PC-9 (cell line): ENCODE measurements at regions of chr16 and their contacts with region 1.

Region 1: GRCh38 chr16:89171463-89172170 is at the start of gene CDH15:
- DNase-seq: peak; percentile 86 to 96
- H3K4me3 ChIP-seq: peak within 1 kb of the TSS; percentile 46; the same call in 1 of the 2 replicates
- H3K27ac ChIP-seq: no peak within 1 kb of the TSS
- H3K4me1 ChIP-seq: peaks cover 11% of the 10 kb centered on the region
- H3K27me3 ChIP-seq: peaks cover 32% of the 10 kb centered on the region
- CTCF ChIP-seq: no peak
- total RNA-seq, gene CDH15: not detected in 2 replicates

Region 2: GRCh38 chr16:88737298-88738150 is 434.1 kb before region 1 on chr16:
- CTCF ChIA-PET with region 1: interaction called, 7 read pairs
- POLR2A ChIA-PET with region 1: no interaction called
- intact Hi-C with region 1: loop called (anchors 5 kb)
- DNase-seq: peak; percentile 50 to 84
- H3K4me3 ChIP-seq: no peak overlapping the region
- H3K27ac ChIP-seq: no peak overlapping the region
- H3K4me1 ChIP-seq: no peaks in the 10 kb centered on the region
- H3K27me3 ChIP-seq: no peaks in the 10 kb centered on the region
- CTCF ChIP-seq: peak; percentile 96

Region 3: GRCh38 chr16:89052890-89053592 is 118.6 kb before region 1 on chr16:
- CTCF ChIA-PET with region 1: no interaction called
- POLR2A ChIA-PET with region 1: interaction called, 14 read pairs
- intact Hi-C with region 1: no loop called
- DNase-seq: peak in 1 of 2 experiments; percentile 71
- H3K4me3 ChIP-seq: no peak overlapping the region
- H3K27ac ChIP-seq: no peak overlapping the region
- H3K4me1 ChIP-seq: no peaks in the 10 kb centered on the region
- H3K27me3 ChIP-seq: peaks cover 67% of the 10 kb centered on the region
- CTCF ChIP-seq: no peak

Region 4: DNA sequence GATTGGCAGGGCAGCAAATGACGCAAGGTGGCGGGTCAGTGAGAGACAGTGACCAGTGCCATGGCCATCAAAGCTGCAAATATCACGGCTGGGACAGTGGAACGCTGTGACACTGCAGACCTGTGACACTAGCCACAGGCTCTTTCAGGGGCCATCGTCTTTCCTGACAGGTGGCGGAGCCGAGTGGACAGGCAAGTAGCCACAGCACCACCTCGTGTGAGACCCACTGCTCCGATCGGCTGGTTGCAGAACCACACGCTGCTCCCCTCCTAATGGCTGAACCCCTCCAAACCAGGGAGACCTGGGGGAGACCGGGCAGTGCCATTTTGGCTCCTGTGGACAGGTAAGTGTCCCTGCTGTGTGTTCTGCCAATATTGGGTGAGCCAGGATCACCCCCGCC is 38.0 kb after region 1 on chr16:
- CTCF ChIA-PET with region 1: no interaction called
- POLR2A ChIA-PET with region 1: no interaction called
- intact Hi-C with region 1: no loop called
- DNase-seq: no peak
- H3K4me3 ChIP-seq: no peak overlapping the region
- H3K27ac ChIP-seq: no peak overlapping the region
- H3K4me1 ChIP-seq: peaks cover 4% of the 10 kb centered on the region; the same call in 1 of the 2 replicates
- H3K27me3 ChIP-seq: no peaks in the 10 kb centered on the region
- CTCF ChIP-seq: no peak

Region 5: DNA sequence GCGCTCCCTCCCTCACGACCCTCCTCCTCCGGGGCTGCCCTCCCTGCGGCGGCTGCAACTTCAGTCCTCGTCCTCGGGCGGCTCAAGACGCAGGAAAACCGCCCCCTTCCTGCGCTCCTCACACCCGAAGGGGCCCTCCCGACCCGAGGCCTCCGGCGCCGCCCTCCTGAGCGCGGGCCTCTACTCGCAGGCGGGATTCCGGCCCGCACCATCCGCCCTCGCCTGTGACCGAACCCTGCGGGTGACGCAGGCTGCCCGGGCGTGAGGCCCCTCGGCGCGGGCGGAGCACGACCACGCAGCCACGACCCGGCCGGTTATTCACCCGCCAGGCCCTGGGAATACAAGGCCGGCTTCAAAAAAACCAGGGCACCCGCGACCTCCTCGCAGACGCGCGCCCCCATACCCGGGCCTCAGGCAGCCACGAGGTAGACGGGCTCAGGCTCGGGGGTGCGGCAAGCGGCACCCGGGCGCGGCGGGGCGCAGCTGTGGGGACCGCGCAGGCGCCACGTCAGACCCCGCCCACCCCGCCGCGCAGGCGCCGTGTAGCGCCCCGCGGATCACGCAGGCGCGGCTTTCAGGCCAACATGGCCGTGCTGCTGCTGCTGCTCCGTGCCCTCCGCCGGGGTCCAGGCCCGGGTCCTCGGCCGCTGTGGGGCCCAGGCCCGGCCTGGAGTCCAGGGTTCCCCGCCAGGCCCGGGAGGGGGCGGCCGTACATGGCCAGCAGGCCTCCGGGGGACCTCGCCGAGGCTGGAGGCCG is 336.4 kb after region 1 on chr16 and contains the start of gene SPG7:
- CTCF ChIA-PET with region 1: no interaction called
- POLR2A ChIA-PET with region 1: interaction called, 21 read pairs
- intact Hi-C with region 1: no loop called
- DNase-seq: peak; percentile 64 to 95
- H3K4me3 ChIP-seq: peak within 1 kb of the TSS; percentile 84
- H3K27ac ChIP-seq: peak within 1 kb of the TSS; percentile 60
- H3K4me1 ChIP-seq: peaks cover 49% of the 10 kb centered on the region
- H3K27me3 ChIP-seq: no peaks in the 10 kb centered on the region
- CTCF ChIP-seq: no peak
- total RNA-seq, gene SPG7: 160 and 198 TPM in 2 replicates

Region 6: GRCh38 chr16:89873972-89874689 is 702.5 kb after region 1 on chr16:
- CTCF ChIA-PET with region 1: interaction called, 14 read pairs
- POLR2A ChIA-PET with region 1: no interaction called
- intact Hi-C with region 1: no loop called
- DNase-seq: peak; percentile 71 to 96
- H3K4me3 ChIP-seq: peak overlapping the region; percentile 65
- H3K27ac ChIP-seq: peak overlapping the region; percentile 93
- H3K4me1 ChIP-seq: peaks cover 11% of the 10 kb centered on the region
- H3K27me3 ChIP-seq: no peaks in the 10 kb centered on the region
- CTCF ChIP-seq: no peak